CD4-positive, alpha-beta T cell (primary cell): ENCODE measurements at regions of chr7 and their contacts with region 1.

Region 1: DNA sequence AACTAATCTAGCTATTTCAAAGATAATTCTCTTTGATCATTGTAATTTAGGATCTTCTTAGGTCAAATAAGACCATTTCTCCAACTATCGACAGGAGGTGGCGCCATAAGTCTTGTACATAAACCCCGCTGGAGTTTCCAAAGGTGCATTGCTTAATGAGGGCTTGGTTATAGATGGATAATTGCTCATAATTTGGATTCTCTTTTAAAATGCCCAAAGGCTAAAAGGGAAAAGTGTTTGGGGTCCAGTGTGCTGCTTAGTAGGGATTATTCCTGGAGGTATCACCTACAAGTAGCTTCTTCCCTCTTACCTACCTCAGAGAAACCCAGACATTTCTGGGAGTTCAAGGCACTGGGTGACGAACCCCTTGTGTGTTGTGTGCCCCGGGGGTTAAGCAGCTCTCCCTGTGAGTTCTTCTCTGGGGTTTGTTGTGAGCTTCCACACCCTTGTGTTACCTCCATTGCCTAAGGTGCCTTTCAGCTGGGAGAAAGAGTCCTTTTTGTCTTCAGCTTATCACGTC is 75.2 kb downstream of the PAXIP1 start:
- DNase-seq: peak; percentile 59 to 91 (median 74)
- ATAC-seq: peak; percentile 59
- H3K4me3 ChIP-seq: peak overlapping the region; percentile 80
- H3K4me3 Mint-ChIP-seq: peak overlapping the region; percentile 93
- H3K27ac ChIP-seq: peak overlapping the region; percentile 69 to 82
- H3K27ac Mint-ChIP-seq: peak overlapping the region; percentile 96
- H3K4me1 ChIP-seq: peaks cover 25% of the 10 kb centered on the region
- H3K4me1 Mint-ChIP-seq: peaks cover 40% of the 10 kb centered on the region
- H3K27me3 ChIP-seq: no peaks in the 10 kb centered on the region
- H3K27me3 Mint-ChIP-seq: no peaks in the 10 kb centered on the region
- CTCF ChIP-seq: peak; percentile 72

Region 2: GRCh38 chr7:154953006-154953684 is 25.5 kb after region 1 on chr7:
- CTCF ChIA-PET with region 1: interaction called, 47 read pairs
- POLR2A ChIA-PET with region 1: interaction called, 9 read pairs
- intact Hi-C with region 1: loop called (anchors 1 to 2 kb)
- DNase-seq: peak; percentile 58 to 83 (median 65)
- ATAC-seq: peak; percentile 62
- H3K4me3 ChIP-seq: no peak overlapping the region
- H3K4me3 Mint-ChIP-seq: no peak overlapping the region
- H3K27ac ChIP-seq: no peak overlapping the region
- H3K27ac Mint-ChIP-seq: no peak overlapping the region
- H3K4me1 ChIP-seq: no peaks in the 10 kb centered on the region
- H3K4me1 Mint-ChIP-seq: no peaks in the 10 kb centered on the region
- H3K27me3 ChIP-seq: no peaks in the 10 kb centered on the region
- H3K27me3 Mint-ChIP-seq: no peaks in the 10 kb centered on the region
- CTCF ChIP-seq: peak; percentile 67

Region 3: GRCh38 chr7:155009570-155010157 is 82.0 kb after region 1 on chr7:
- CTCF ChIA-PET with region 1: interaction called, 8 read pairs
- POLR2A ChIA-PET with region 1: interaction called, 29 read pairs
- intact Hi-C with region 1: loop called in 1 of 2 experiments (anchors 1 kb)
- DNase-seq: peak in 8 of 14 experiments; percentile 12 to 53 (median 28)
- ATAC-seq: no peak
- H3K4me3 ChIP-seq: no peak overlapping the region
- H3K4me3 Mint-ChIP-seq: no peak overlapping the region
- H3K27ac ChIP-seq: no peak overlapping the region
- H3K27ac Mint-ChIP-seq: no peak overlapping the region
- H3K4me1 ChIP-seq: no peaks in the 10 kb centered on the region
- H3K4me1 Mint-ChIP-seq: peaks cover 15% of the 10 kb centered on the region
- H3K27me3 ChIP-seq: no peaks in the 10 kb centered on the region
- H3K27me3 Mint-ChIP-seq: no peaks in the 10 kb centered on the region
- CTCF ChIP-seq: peak; percentile 57

Region 4: DNA sequence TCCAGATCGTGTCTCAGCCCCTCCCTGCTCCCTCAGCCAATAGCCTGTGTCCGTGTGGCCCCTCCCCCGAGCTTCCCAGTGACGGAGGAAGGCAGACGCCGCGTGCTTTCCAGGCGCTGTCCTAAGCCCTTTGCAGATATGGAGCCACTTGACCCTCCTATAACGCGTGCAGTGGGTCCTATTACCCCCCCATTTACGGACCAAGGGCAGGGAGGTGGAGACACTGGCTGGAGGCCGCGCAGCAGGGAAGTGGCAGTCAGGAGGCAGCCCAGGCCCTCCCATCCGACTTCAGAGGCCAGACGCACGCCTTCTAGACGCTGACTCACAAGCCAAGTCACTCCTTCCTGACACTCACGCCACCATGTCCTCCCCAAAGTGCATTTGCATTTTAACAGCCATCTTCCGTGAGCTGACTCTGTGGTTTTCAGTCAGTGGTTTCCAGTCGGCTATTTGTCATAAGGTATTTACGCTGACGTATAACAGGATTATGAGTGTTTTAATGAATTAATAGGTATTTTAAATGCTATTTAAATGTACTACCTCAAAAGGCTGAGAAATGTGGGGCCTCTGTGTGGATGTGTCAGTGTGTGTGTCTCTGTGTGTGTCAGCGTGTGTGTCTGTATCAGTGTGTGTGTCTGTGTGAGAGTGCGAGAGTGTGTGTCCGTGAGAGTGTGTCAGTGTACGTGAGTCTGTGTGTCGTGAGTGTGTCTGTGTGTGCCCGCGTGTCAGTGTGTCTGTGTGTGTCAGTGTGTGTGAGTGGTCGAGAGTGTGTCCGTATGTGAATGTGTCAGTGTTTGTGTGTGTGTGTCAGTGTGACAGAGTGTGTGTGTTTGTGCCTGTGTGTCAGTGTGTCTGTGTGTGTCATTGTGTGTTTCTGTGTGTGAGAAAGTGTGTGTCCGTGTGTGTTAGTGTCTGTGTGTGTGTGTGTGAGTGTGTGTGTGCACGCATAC is 278.0 kb after region 1 on chr7:
- CTCF ChIA-PET with region 1: no interaction called
- POLR2A ChIA-PET with region 1: interaction called, 7 read pairs
- intact Hi-C with region 1: loop called (anchors 5 to 10 kb)
- DNase-seq: peak; percentile 67 to 98 (median 81)
- ATAC-seq: peak; percentile 91
- H3K4me3 ChIP-seq: peak overlapping the region; percentile 69
- H3K4me3 Mint-ChIP-seq: peak overlapping the region; percentile 91
- H3K27ac ChIP-seq: peak overlapping the region; percentile 67 to 93
- H3K27ac Mint-ChIP-seq: peak overlapping the region; percentile 93
- H3K4me1 ChIP-seq: peaks cover 29% of the 10 kb centered on the region
- H3K4me1 Mint-ChIP-seq: peaks cover 22% of the 10 kb centered on the region
- H3K27me3 ChIP-seq: no peaks in the 10 kb centered on the region
- H3K27me3 Mint-ChIP-seq: no peaks in the 10 kb centered on the region
- CTCF ChIP-seq: no peak

Region 5: DNA sequence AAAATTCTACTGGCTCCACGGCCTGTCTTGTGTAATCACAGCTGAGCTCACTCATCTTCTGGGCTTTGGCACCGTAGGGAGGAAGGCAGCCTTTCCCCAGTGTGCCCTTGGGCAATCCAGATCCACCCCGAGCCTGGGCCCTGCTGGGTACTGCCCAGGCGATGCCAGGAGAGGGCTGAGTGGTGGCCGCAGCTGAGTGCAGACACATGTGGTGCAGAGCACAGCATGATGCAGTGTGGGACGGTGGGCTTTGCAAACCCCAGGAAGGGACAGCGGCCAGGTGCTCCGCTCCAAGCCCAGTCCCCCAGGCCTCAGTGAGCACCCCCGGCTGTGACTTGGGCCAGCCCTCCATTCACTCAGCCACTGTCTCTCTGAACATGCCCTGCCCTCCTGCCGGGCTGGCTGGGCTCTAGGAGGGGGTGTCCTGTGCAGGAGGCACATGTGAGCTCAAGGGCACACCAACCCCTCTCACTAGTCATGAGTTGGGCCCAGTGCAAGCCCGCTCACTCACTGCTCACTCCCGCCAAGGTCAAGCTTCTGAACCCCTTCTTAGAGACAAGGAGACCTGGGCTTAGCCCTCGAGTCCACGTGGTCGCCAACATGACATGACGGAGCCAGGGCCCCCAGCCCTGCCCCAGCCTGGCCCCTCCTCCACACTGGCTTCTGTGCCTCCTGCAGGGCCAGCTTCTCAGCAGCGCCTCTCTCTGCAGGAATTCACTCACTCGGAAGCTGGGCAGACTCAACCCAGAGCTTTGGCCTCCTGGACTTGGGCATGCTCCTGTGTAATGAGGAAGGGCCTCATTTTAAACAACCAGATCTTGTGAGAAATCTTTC is 292.5 kb after region 1 on chr7:
- CTCF ChIA-PET with region 1: no interaction called
- POLR2A ChIA-PET with region 1: no interaction called
- intact Hi-C with region 1: no loop called
- DNase-seq: no peak
- ATAC-seq: no peak
- H3K4me3 ChIP-seq: no peak overlapping the region
- H3K4me3 Mint-ChIP-seq: no peak overlapping the region
- H3K27ac ChIP-seq: no peak overlapping the region
- H3K27ac Mint-ChIP-seq: no peak overlapping the region
- H3K4me1 ChIP-seq: no peaks in the 10 kb centered on the region
- H3K4me1 Mint-ChIP-seq: no peaks in the 10 kb centered on the region
- H3K27me3 ChIP-seq: no peaks in the 10 kb centered on the region
- H3K27me3 Mint-ChIP-seq: peaks cover 17% of the 10 kb centered on the region
- CTCF ChIP-seq: no peak

Region 6: DNA sequence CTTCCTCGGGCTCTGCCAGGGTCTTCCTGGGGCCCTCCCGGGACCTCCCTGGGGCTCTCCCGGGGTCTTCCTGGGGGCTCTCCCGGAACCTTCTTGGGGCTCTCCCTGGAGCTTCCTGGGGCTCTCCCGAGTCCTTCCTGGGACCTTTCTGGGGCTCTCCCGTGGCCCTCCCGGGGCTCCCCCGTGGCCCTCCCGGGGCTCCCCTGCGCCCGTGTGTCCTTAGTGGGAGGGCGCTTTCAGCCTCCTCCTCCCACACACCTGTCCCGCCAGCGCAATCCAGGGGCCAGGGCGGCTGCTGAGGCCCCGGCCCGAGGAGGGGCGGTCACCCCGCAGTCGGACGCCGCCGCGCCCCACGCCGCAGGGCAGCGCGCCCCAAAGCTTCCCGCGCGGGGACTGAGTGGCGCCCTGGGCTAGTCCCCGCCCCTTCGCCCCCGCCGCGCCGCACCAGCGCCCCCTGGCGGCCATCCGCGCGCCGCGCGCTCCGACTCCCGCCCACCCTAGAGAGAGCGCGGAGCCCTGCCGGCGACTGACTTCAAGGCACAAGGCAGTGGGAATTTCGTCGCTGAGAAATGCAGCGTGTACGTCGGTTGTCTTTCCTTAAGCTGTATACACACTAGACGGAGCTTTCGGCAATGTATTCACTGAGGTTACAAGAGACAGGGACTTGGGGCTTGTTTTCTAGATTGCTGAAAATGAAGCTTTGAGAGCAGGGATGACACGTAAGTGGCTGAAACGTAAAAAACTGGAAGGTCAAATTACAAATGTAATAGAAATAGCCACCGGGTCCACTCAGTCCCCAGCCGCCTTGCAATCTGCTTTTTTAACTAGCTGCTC is 417.1 kb after region 1 on chr7:
- CTCF ChIA-PET with region 1: interaction called, 24 read pairs
- POLR2A ChIA-PET with region 1: interaction called, 3 read pairs
- intact Hi-C with region 1: loop called (anchors 1 kb)
- DNase-seq: peak; percentile 64 to 91 (median 80)
- ATAC-seq: peak; percentile 97
- H3K4me3 ChIP-seq: peak overlapping the region; percentile 47
- H3K4me3 Mint-ChIP-seq: peak overlapping the region; percentile 35
- H3K27ac ChIP-seq: no peak overlapping the region
- H3K27ac Mint-ChIP-seq: no peak overlapping the region
- H3K4me1 ChIP-seq: peaks cover 11% of the 10 kb centered on the region
- H3K4me1 Mint-ChIP-seq: peaks cover 5% of the 10 kb centered on the region
- H3K27me3 ChIP-seq: peaks cover 11 to 12% of the 10 kb centered on the region in 2 experiments
- H3K27me3 Mint-ChIP-seq: peaks cover 10% of the 10 kb centered on the region
- CTCF ChIP-seq: peak; percentile 70

Region 7: GRCh38 chr7:155738652-155739537 is 811.2 kb after region 1 on chr7:
- CTCF ChIA-PET with region 1: no interaction called
- POLR2A ChIA-PET with region 1: no interaction called
- intact Hi-C with region 1: loop called (anchors 1 to 10 kb)
- DNase-seq: peak; percentile 40 to 80 (median 60)
- ATAC-seq: peak; percentile 93
- H3K4me3 ChIP-seq: no peak overlapping the region
- H3K4me3 Mint-ChIP-seq: peak overlapping the region; percentile 26
- H3K27ac ChIP-seq: no peak overlapping the region
- H3K27ac Mint-ChIP-seq: peak overlapping the region; percentile 64
- H3K4me1 ChIP-seq: peaks cover 10% of the 10 kb centered on the region
- H3K4me1 Mint-ChIP-seq: peaks cover 65% of the 10 kb centered on the region
- H3K27me3 ChIP-seq: no peaks in the 10 kb centered on the region
- H3K27me3 Mint-ChIP-seq: no peaks in the 10 kb centered on the region
- CTCF ChIP-seq: peak; percentile 67

Region 8: DNA sequence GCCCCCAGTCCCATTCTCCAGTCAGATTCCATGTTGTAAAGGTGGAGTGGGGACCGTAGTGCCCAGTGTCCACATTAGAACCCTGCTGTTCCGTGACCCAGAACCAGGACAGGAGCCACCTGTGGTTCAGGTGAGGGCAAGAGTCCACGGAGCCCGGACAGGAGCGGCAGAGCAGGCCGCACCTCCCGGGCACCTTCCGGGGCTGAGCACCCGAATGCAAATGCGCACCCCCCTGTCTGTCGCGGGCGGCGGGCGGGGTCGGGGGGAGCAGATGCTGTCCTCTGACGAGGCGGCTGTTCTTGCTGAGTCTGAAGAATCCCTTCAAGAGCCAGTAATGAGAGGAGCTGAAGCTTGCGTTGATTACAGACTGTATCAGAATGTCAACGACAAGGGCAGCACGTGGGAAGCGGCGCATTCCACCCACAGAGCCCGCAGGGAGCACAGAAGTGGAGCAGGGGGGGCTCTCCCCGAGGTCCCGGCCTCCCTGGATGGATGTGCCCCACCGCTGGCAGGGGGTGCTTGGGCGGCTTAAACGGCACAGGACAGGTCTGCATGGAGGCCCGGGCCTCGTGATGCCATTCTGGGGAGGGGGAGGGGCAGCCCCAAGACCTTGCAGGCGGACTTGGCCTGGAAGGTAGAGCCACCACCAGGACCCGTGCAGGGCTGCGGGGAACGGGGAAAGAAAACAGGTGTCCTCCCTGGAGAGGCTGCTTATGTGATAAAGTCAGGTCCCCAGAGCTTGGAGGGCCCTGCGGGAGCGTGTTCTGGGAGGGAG is 1305.4 kb after region 1 on chr7:
- CTCF ChIA-PET with region 1: no interaction called
- POLR2A ChIA-PET with region 1: no interaction called
- intact Hi-C with region 1: no loop called
- DNase-seq: no peak
- ATAC-seq: no peak
- H3K4me3 ChIP-seq: no peak overlapping the region
- H3K4me3 Mint-ChIP-seq: no peak overlapping the region
- H3K27ac ChIP-seq: no peak overlapping the region
- H3K27ac Mint-ChIP-seq: no peak overlapping the region
- H3K4me1 ChIP-seq: no peaks in the 10 kb centered on the region
- H3K4me1 Mint-ChIP-seq: no peaks in the 10 kb centered on the region
- H3K27me3 ChIP-seq: no peaks in the 10 kb centered on the region
- H3K27me3 Mint-ChIP-seq: peaks cover 13% of the 10 kb centered on the region
- CTCF ChIP-seq: no peak

Region 9: DNA sequence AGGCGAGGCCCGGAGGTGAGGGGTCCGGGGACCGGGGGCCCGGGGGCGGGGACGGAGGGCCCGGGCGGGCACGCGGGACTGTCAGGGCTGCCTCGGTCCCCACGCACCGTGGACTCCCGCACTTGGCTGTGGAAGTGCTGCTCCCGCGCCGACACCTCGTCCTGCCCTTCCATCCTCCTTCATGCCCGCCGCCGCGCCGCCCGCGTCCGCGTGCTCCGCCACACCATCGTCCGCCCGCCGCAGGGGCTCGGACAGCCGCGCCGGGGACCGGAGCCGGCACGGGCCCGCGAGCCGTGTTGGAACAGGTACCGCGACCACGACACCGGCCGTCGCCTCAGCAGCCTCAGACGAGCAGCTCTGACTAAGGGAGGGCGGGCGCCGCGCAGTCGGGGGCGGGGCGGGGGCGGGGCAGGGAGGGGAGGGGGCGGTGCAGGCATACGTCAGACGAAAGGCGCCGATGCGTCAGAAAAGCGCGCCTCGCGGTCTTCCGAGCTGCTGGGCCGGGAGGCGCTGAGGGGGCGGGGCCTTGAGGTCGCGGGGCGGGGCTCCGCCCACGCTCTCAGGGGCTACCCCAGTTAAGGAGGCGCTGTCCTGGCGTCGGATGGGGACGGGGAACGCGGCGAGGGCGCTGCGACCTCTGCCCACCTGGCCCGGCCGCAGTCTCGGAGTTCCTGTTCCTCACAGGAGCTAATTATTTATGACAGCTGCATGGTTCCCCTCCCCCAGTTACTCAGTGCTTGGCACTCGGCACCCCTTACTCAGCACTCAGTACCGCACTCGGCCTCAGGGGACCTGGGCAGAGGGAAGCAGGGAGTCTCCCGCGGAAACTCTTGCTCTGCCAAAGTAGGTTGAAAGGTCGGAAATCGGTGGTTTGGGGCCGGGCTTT is 1965.4 kb after region 1 on chr7 and contains the start of gene LMBR1:
- CTCF ChIA-PET with region 1: no interaction called
- POLR2A ChIA-PET with region 1: no interaction called
- intact Hi-C with region 1: loop called in 1 of 2 experiments (anchors 5 kb)
- DNase-seq: peak; percentile 91 to 98 (median 94)
- ATAC-seq: peak; percentile 80
- H3K4me3 ChIP-seq: peak within 1 kb of the TSS; percentile 77
- H3K4me3 Mint-ChIP-seq: peak within 1 kb of the TSS; percentile 96
- H3K27ac ChIP-seq: peak within 1 kb of the TSS; percentile 73 to 83
- H3K27ac Mint-ChIP-seq: peak within 1 kb of the TSS; percentile 93
- H3K4me1 ChIP-seq: peaks cover 24% of the 10 kb centered on the region
- H3K4me1 Mint-ChIP-seq: peaks cover 54% of the 10 kb centered on the region
- H3K27me3 ChIP-seq: no peaks in the 10 kb centered on the region
- H3K27me3 Mint-ChIP-seq: no peaks in the 10 kb centered on the region
- CTCF ChIP-seq: peak; percentile 72
- total RNA-seq, gene LMBR1: 61.6 to 61.9 TPM